Activated naive CD4-positive, alpha-beta T cell treated with anti-CD3 and anti-CD28 coated beads for 36 hours (primary cell): ENCODE measurements at regions of chr4 and their contacts with region 1.

Region 1: GRCh38 chr4:122783301-122784215 is 43.1 kb upstream of the FGF2 start:
- DNase-seq: no peak
- H3K4me3 Mint-ChIP-seq: no peak overlapping the region
- H3K27ac Mint-ChIP-seq: no peak overlapping the region
- H3K4me1 Mint-ChIP-seq: peaks cover 19% of the 10 kb centered on the region
- H3K27me3 Mint-ChIP-seq: peaks cover 16% of the 10 kb centered on the region

Region 2: GRCh38 chr4:121784975-121785374 is 998.6 kb before region 1 on chr4:
- CTCF ChIA-PET with region 1: no interaction called
- intact Hi-C with region 1: no loop called
- DNase-seq: no peak
- H3K4me3 Mint-ChIP-seq: no peak overlapping the region
- H3K27ac Mint-ChIP-seq: no peak overlapping the region
- H3K4me1 Mint-ChIP-seq: peaks cover 5% of the 10 kb centered on the region
- H3K27me3 Mint-ChIP-seq: peaks cover 33% of the 10 kb centered on the region

Region 3: DNA sequence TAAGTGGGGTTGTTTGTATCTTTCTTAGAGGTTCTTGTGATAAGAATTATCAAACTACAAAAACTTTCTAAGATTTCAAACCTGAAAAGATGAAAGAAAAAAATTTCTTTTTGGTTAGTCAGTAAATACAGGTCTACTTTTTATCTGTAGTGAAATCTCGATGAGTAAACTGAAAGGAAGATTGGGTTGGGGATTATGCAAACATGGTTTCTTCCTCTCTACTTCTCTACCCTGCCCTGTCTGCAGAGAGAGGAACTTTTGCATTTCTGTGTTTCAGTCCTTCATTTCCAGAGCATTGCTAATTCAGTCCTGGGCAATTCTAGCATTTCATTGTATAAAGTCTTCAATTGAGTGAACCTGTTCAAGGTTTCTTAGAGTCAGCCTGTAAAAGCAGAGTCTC is 275.5 kb before region 1 on chr4:
- CTCF ChIA-PET with region 1: no interaction called
- intact Hi-C with region 1: loop called (anchors 5 kb)
- DNase-seq: no peak
- H3K4me3 Mint-ChIP-seq: peak overlapping the region; percentile 53
- H3K27ac Mint-ChIP-seq: peak overlapping the region; percentile 98
- H3K4me1 Mint-ChIP-seq: peaks cover 89% of the 10 kb centered on the region
- H3K27me3 Mint-ChIP-seq: no peaks in the 10 kb centered on the region

Region 4: GRCh38 chr4:122716825-122717448 is 66.6 kb before region 1 on chr4:
- CTCF ChIA-PET with region 1: no interaction called
- intact Hi-C with region 1: loop called (anchors 2 kb)
- DNase-seq: peak; percentile 94
- H3K4me3 Mint-ChIP-seq: no peak overlapping the region
- H3K27ac Mint-ChIP-seq: peak overlapping the region; percentile 65
- H3K4me1 Mint-ChIP-seq: peaks cover 41% of the 10 kb centered on the region
- H3K27me3 Mint-ChIP-seq: no peaks in the 10 kb centered on the region

Region 5: DNA sequence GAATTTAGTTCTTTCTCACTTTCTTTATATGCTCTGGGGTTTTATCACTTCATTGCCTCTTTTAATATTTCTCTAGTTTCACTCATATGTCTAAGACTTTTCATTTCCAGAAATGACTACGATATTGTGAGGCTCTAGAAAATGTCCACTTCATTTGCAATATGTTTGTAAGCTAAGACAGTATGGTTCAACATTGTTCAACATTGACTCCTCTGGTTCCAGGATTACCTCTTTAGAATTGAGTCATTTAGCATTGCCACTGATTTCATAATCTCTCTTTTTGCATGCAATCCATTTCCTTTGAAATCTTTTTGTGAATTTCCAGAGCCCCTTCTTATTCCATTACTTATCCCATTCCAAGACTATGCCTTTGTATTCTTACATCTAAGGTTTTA is 18.7 kb before region 1 on chr4:
- CTCF ChIA-PET with region 1: interaction called, 4 read pairs
- intact Hi-C with region 1: loop called (anchors 1 kb)
- DNase-seq: no peak
- H3K4me3 Mint-ChIP-seq: no peak overlapping the region
- H3K27ac Mint-ChIP-seq: peak overlapping the region; percentile 50
- H3K4me1 Mint-ChIP-seq: peaks cover 30% of the 10 kb centered on the region
- H3K27me3 Mint-ChIP-seq: no peaks in the 10 kb centered on the region

Region 6: GRCh38 chr4:122798101-122798500 is 14.5 kb after region 1 on chr4:
- CTCF ChIA-PET with region 1: interaction called, 3 read pairs
- intact Hi-C with region 1: loop called (anchors 1 kb)
- DNase-seq: peak; percentile 28
- H3K4me3 Mint-ChIP-seq: no peak overlapping the region
- H3K27ac Mint-ChIP-seq: peak overlapping the region; percentile 41
- H3K4me1 Mint-ChIP-seq: peaks cover 4% of the 10 kb centered on the region
- H3K27me3 Mint-ChIP-seq: no peaks in the 10 kb centered on the region

Region 7: DNA sequence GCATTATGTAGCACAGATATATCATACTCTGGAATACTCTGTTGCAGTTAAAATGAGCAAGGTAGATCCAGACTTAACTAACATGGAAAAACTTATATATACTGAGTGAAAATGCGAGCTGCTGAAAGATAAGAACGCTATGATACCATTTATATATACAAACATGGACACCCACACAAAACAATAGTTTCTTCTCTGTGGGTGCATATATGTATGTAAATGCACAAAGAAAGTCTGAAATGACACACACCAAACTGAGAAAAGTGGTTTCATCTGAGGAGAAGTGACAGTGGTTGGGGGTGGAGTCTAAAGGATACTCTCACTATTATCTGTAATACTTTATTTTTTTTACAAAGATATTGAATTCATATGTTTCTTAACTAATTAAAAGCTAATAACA is 30.9 kb after region 1 on chr4:
- CTCF ChIA-PET with region 1: no interaction called
- intact Hi-C with region 1: loop called (anchors 1 kb)
- DNase-seq: peak; percentile 24
- H3K4me3 Mint-ChIP-seq: no peak overlapping the region
- H3K27ac Mint-ChIP-seq: no peak overlapping the region
- H3K4me1 Mint-ChIP-seq: peaks cover 8% of the 10 kb centered on the region
- H3K27me3 Mint-ChIP-seq: peaks cover 12% of the 10 kb centered on the region

Region 8: DNA sequence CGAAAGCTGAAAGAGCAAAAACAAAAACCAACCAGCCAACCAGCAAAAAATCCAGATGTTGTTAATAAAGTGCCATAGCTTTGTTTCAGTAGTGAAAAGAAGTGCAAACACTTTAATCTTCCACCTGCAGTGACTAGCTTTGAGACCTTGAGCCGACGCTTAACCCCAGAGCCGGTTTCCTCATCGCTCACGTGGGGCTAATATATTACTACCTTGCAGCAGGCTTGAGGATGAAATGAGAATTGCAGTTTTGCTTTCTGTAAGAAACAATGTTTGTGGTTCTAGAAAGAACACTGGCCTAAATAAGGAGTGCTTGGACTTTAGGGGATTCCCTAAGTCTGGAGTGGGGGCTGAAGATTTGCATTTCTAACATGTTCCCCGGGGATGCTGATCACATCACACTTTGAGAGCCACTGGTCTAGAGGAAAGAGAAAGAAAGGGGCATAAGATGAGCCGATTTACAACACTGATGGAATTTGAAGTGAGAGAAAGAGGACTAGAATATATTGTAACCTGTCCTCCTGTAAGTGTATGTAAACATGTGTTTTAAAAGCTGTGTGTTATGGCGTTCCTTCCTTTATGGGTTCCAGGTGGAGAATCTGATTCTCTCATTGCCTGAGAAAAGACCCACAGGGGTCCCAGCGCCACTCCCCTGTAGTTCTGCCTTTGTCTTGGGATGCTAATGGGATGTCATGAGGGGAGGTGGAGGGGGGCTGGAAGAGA is 44.5 kb after region 1 on chr4:
- CTCF ChIA-PET with region 1: no interaction called
- intact Hi-C with region 1: loop called (anchors 1 kb)
- DNase-seq: peak; percentile 71
- H3K4me3 Mint-ChIP-seq: peak overlapping the region; percentile 78
- H3K27ac Mint-ChIP-seq: peak overlapping the region; percentile 9
- H3K4me1 Mint-ChIP-seq: peaks cover 12% of the 10 kb centered on the region
- H3K27me3 Mint-ChIP-seq: peaks cover 74% of the 10 kb centered on the region